ENCODE measurements at regions of chr1 and their contacts with region 1.

Region 1: GRCh38 chr1:241611063-241611462 is 29.1 kb downstream of the CHML start:
- DNase-seq: no peak
- ATAC-seq: peak; percentile 78 to 91 (median 82)
- H3K4me3 ChIP-seq: no peak overlapping the region
- H3K27ac ChIP-seq: no peak overlapping the region
- H3K4me1 ChIP-seq: peaks cover 0 to 12% (median 0%) of the 10 kb centered on the region in 12 donors
- H3K27me3 ChIP-seq: no peaks in the 10 kb centered on the region
- CTCF ChIP-seq: peak; percentile 52 to 80 (median 68)
- POLR2A ChIP-seq: no peak

Region 2: DNA sequence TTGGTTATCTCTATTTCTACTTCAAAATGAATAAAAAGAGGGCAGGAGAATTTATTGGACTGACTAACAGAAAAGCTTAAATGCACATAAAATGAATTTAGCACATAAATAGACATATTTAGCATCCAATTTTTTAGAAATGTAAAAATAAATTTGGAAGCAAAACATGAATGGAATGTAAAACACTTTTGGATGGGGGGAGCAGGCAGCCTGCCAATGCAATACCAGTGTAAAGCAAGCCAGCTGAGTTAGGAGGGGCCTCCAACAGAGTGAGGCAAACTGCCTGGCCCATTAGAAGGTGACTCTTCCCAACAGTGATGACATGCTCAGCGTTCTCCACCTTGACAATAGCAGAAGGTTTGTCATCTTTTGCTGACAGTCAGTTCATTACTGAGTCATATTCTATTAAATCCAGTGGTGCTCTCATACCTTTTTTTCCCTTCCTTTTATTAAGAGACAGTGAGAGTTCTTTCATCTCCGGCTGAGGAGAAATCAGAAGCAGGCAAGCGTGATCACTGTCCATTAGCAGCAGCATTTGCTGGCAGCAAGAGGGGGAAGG is 217.5 kb after region 1 on chr1:
- intact Hi-C with region 1: loop called in 7 of 10 experiments (anchors 5 to 10 kb)
- DNase-seq: peak in 1 of 5 donors; percentile 23
- ATAC-seq: peak in 1 of 4 donors; percentile 47
- H3K4me3 ChIP-seq: no peak overlapping the region
- H3K27ac ChIP-seq: no peak overlapping the region
- H3K4me1 ChIP-seq: peaks cover 0 to 8% (median 0%) of the 10 kb centered on the region in 12 donors
- H3K27me3 ChIP-seq: peaks cover 0 to 8% (median 0%) of the 10 kb centered on the region in 9 donors
- CTCF ChIP-seq: no peak
- POLR2A ChIP-seq: no peak

Region 3: GRCh38 chr1:241842565-241842964 is 231.5 kb after region 1 on chr1:
- intact Hi-C with region 1: loop called in 5 of 10 experiments (anchors 5 to 10 kb)
- DNase-seq: no peak
- ATAC-seq: peak; percentile 68 to 94 (median 87)
- H3K4me3 ChIP-seq: no peak overlapping the region
- H3K27ac ChIP-seq: peak overlapping the region in 3 of 12 donors; percentile 19 to 59 (median 45)
- H3K4me1 ChIP-seq: peaks cover 0 to 16% (median 4%) of the 10 kb centered on the region in 12 donors
- H3K27me3 ChIP-seq: no peaks in the 10 kb centered on the region
- CTCF ChIP-seq: no peak
- POLR2A ChIP-seq: no peak

Region 4: GRCh38 chr1:241985787-241986186 is 374.7 kb after region 1 on chr1:
- intact Hi-C with region 1: loop called in 5 of 10 experiments (anchors 10 kb)
- DNase-seq: no peak
- ATAC-seq: no peak
- H3K4me3 ChIP-seq: no peak overlapping the region
- H3K27ac ChIP-seq: no peak overlapping the region
- H3K4me1 ChIP-seq: no peaks in the 10 kb centered on the region
- H3K27me3 ChIP-seq: no peaks in the 10 kb centered on the region
- CTCF ChIP-seq: peak in 10 of 12 donors; percentile 14 to 56 (median 34)
- POLR2A ChIP-seq: no peak

Region 5: DNA sequence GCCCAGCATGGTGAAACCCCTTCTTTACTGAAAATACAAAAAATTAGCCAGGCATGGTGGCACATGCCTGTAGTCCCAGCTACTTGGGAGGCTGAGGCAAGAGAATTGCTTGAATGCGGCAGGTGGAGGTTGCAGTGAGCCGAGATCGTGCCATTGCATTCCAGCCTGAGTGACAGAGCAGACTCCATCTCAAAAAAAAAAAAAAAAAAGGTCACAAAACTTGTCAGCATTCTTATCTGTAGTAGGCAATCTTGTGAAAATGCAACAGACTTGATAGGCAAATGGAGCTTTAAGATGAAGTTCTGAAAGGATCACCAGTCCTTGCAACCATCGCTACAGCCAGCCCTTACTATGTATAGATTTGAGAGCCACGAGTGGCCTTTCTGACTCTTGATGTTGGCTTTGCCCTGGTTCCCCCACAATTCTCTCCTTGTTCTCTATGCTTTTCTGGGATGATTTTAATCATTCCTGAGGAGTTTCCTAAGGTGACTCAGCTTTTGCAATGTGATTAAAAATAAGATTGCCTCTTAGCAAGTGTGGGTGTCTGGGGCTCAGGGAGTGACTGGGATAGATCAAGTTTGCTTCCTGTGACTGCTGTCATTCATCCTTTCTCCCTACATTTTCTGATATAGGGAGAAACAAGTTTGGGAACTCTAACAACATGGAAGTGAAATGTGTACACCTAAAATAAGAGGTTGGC is 395.0 kb after region 1 on chr1:
- intact Hi-C with region 1: loop called in 1 of 10 experiments (anchors 10 kb)
- DNase-seq: no peak
- ATAC-seq: no peak
- H3K4me3 ChIP-seq: no peak overlapping the region
- H3K27ac ChIP-seq: no peak overlapping the region
- H3K4me1 ChIP-seq: no peaks in the 10 kb centered on the region
- H3K27me3 ChIP-seq: no peaks in the 10 kb centered on the region
- CTCF ChIP-seq: no peak
- POLR2A ChIP-seq: no peak